Naive thymus-derived CD4-positive, alpha-beta T cell (primary cell): ENCODE measurements at regions of chr7 and their contacts with region 1.

Region 1: DNA sequence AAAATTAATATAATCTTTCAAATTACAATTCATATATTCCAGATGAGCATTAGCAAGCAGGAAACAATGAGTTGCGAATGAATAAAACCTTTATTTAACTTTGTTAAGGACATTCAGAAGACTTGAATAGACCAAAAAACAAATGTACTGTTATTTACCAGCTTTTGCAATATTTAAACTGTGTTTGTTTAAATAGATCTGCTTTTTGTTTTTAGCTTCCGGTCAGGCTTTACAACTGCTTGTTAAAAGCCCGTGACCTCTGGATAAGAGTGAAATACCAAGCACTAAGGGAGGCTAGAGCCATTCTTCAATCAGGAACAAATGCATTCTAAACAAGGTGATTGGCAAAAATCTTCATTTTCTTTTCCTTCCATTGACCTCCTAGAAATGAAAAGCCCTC is 184.9 kb upstream of the GNAI1 start:
- DNase-seq: no peak
- ATAC-seq: no peak
- H3K4me3 ChIP-seq: no peak overlapping the region
- H3K4me3 Mint-ChIP-seq: no peak overlapping the region
- H3K27ac ChIP-seq: no peak overlapping the region
- H3K27ac Mint-ChIP-seq: no peak overlapping the region
- H3K4me1 ChIP-seq: no peaks in the 10 kb centered on the region
- H3K4me1 Mint-ChIP-seq: no peaks in the 10 kb centered on the region
- H3K27me3 ChIP-seq: no peaks in the 10 kb centered on the region
- H3K27me3 Mint-ChIP-seq: no peaks in the 10 kb centered on the region

Region 2: DNA sequence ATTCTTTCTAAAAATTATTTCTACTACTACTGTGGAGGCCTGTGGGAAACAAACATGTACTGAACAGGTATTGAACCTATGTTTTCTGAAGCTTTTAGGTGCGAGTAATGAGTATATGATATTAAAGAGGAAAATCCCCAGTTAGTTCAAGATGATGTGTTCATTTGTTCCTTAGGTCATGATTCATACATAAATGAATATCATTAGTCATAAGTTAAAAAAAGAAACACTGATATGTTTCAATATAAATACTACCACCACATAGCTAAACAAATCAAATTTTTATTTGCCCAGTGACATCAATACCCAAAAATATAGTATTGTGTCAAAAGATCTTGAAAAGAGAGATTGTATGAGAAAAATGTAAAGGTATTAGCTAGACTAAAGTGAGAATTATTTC is 25.8 kb before region 1 on chr7:
- CTCF ChIA-PET with region 1: no interaction called
- POLR2A ChIA-PET with region 1: no interaction called
- intact Hi-C with region 1: loop called in 1 of 2 experiments (anchors 5 kb)
- DNase-seq: no peak
- ATAC-seq: no peak
- H3K4me3 ChIP-seq: no peak overlapping the region
- H3K4me3 Mint-ChIP-seq: no peak overlapping the region
- H3K27ac ChIP-seq: no peak overlapping the region
- H3K27ac Mint-ChIP-seq: no peak overlapping the region
- H3K4me1 ChIP-seq: no peaks in the 10 kb centered on the region
- H3K4me1 Mint-ChIP-seq: no peaks in the 10 kb centered on the region
- H3K27me3 ChIP-seq: no peaks in the 10 kb centered on the region
- H3K27me3 Mint-ChIP-seq: no peaks in the 10 kb centered on the region

Region 3: GRCh38 chr7:79930604-79931003 is 19.2 kb before region 1 on chr7:
- CTCF ChIA-PET with region 1: no interaction called
- POLR2A ChIA-PET with region 1: no interaction called
- intact Hi-C with region 1: loop called in 1 of 2 experiments (anchors 2 kb)
- DNase-seq: no peak
- ATAC-seq: no peak
- H3K4me3 ChIP-seq: no peak overlapping the region
- H3K4me3 Mint-ChIP-seq: no peak overlapping the region
- H3K27ac ChIP-seq: no peak overlapping the region
- H3K27ac Mint-ChIP-seq: no peak overlapping the region
- H3K4me1 ChIP-seq: no peaks in the 10 kb centered on the region
- H3K4me1 Mint-ChIP-seq: peaks cover 0 to 7% (median 3%) of the 10 kb centered on the region in 7 donors
- H3K27me3 ChIP-seq: no peaks in the 10 kb centered on the region
- H3K27me3 Mint-ChIP-seq: no peaks in the 10 kb centered on the region